ENCODE measurements at regions of chr3 and their contacts with region 1.

Region 1: GRCh38 chr3:156674046-156674910 is at the start of gene TIPARP:
- DNase-seq: peak; percentile 95 to 100 (median 99)
- ATAC-seq: peak; percentile 79
- H3K4me3 ChIP-seq: peak within 1 kb of the TSS; percentile 85
- H3K4me3 Mint-ChIP-seq: peak within 1 kb of the TSS; percentile 93
- H3K27ac ChIP-seq: peak within 1 kb of the TSS; percentile 68 to 93
- H3K27ac Mint-ChIP-seq: peak within 1 kb of the TSS; percentile 96
- H3K4me1 ChIP-seq: peaks cover 23% of the 10 kb centered on the region
- H3K4me1 Mint-ChIP-seq: peaks cover 44% of the 10 kb centered on the region
- H3K27me3 ChIP-seq: no peaks in the 10 kb centered on the region
- H3K27me3 Mint-ChIP-seq: no peaks in the 10 kb centered on the region
- CTCF ChIP-seq: peak; percentile 63
- total RNA-seq, gene TIPARP: 158 to 166 TPM

Region 2: DNA sequence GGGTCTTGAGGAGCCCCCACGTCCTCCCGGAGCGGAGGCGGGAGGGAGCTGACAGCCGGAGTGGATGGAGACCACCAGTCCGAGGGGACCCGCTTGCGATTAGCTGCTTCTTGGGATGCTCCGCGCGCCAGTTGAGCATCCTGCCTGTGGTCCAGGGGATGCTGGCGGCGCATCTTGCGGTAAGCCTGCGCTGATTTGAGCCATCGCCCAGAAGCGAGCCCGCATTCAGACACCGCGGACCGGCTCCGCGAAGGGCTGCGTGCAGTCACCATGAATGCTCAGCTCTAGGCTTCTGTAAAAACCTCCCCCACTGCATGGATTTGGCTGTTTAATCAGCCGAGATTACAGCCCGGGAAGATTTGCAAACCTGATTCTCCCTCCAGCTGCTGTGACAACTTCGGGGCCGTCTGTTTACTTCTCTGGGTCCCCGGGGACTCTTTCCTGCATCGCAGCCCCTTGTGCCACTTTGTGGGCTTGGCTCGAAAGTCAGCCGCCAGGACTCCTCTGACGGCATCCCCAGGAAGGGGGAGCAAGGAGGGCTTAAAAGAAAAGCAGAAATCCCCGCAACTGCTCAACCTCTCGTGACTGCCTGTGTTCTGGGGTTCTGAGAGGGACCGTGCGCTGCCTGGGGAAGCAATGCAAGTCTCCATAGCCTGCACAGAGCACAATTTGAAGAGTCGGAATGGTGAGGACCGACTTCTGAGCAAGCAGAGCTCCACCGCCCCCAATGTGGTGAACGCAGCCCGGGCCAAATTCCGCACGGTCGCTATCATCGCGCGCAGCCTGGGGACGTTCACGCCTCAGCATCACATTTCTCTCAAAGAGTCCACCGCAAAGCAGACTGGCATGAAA is 382.8 kb before region 1 on chr3:
- CTCF ChIA-PET with region 1: no interaction called
- POLR2A ChIA-PET with region 1: no interaction called
- intact Hi-C with region 1: no loop called
- DNase-seq: peak in 5 of 14 experiments; percentile 3 to 65 (median 9)
- ATAC-seq: peak; percentile 58
- H3K4me3 ChIP-seq: no peak overlapping the region
- H3K4me3 Mint-ChIP-seq: no peak overlapping the region
- H3K27ac ChIP-seq: no peak overlapping the region
- H3K27ac Mint-ChIP-seq: no peak overlapping the region
- H3K4me1 ChIP-seq: peaks cover 14% of the 10 kb centered on the region
- H3K4me1 Mint-ChIP-seq: no peaks in the 10 kb centered on the region
- H3K27me3 ChIP-seq: peaks cover 36 to 54% of the 10 kb centered on the region in 2 experiments
- H3K27me3 Mint-ChIP-seq: peaks cover 92% of the 10 kb centered on the region
- CTCF ChIP-seq: no peak

Region 3: GRCh38 chr3:156554842-156555687 is 119.2 kb before region 1 on chr3 and contains the start of gene SSR3:
- CTCF ChIA-PET with region 1: interaction called, 6 read pairs
- POLR2A ChIA-PET with region 1: interaction called, 91 read pairs
- intact Hi-C with region 1: loop called (anchors 1 kb)
- DNase-seq: peak; percentile 95 to 100 (median 98)
- ATAC-seq: peak; percentile 98
- H3K4me3 ChIP-seq: peak within 1 kb of the TSS; percentile 65
- H3K4me3 Mint-ChIP-seq: peak within 1 kb of the TSS; percentile 97
- H3K27ac ChIP-seq: peak within 1 kb of the TSS; percentile 48 to 76
- H3K27ac Mint-ChIP-seq: peak within 1 kb of the TSS; percentile 90
- H3K4me1 ChIP-seq: peaks cover 19% of the 10 kb centered on the region
- H3K4me1 Mint-ChIP-seq: peaks cover 52% of the 10 kb centered on the region
- H3K27me3 ChIP-seq: no peaks in the 10 kb centered on the region
- H3K27me3 Mint-ChIP-seq: peaks cover 5% of the 10 kb centered on the region
- CTCF ChIP-seq: no peak
- total RNA-seq, gene SSR3: 78.8 to 79.5 TPM

Region 4: DNA sequence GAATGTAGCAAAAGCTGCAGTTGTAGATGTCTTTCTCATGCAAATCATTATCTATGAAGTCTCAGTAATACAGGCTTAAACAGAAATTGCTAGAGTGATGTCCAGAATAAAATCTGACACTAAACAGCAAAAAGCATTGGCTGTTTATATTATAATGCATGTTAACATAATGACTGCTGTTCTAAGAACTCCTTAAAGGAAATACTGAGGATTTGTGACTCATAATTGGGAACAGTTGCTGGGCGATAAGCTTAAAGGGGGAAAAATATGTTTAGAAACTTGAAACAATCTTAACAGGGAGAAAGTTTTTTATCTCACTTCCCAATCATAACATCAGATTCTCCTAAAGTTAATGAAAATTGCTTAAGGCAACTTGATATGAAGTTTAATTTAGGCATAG is 17.6 kb after region 1 on chr3:
- CTCF ChIA-PET with region 1: no interaction called
- POLR2A ChIA-PET with region 1: interaction called, 29 read pairs
- intact Hi-C with region 1: loop called in 1 of 2 experiments (anchors 2 kb)
- DNase-seq: no peak
- ATAC-seq: no peak
- H3K4me3 ChIP-seq: no peak overlapping the region
- H3K4me3 Mint-ChIP-seq: no peak overlapping the region
- H3K27ac ChIP-seq: no peak overlapping the region
- H3K27ac Mint-ChIP-seq: no peak overlapping the region
- H3K4me1 ChIP-seq: peaks cover 14% of the 10 kb centered on the region
- H3K4me1 Mint-ChIP-seq: peaks cover 46% of the 10 kb centered on the region
- H3K27me3 ChIP-seq: no peaks in the 10 kb centered on the region
- H3K27me3 Mint-ChIP-seq: no peaks in the 10 kb centered on the region
- CTCF ChIP-seq: no peak

Region 5: DNA sequence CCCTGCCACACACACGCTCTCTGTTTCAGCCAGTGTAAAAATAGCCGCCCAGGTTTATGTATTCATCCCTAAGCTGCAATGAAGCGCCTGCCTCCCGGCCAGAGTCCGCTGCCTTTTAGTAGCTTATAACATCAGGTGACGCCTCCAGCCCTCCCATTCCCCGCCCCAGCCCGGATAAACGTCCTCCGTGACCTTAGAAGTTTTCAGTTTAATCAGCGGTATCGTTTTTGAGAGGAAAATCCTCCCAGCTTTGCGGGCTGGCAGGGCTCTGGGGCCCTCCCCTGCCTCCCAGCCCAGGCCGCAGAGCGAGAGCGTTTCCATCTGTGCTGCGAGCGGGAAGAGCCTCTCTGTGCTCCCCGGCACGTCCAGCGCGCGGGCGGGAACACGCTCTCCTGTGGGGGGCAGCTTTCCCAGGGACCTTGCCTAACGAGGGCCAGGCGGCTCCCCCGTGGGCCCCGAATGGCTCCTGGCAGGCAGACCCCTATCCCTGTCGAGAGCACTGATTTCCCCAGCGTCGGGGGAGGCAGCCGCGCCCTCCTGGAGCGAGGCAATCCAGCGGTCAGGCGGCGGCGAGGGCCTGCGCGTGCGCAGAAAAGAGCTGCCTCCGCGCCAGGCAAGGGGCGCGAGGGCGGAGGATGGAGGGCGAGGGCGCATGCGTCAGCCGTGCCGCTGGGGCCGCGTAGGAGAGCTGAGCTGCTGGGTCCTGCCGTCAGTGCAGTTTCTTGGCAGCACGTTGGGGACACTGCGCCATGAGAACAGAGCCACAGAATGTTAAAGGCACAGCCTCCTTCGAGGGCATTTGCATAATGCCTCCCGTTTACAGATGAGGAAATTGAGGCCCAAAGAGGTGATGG is 414.6 kb after region 1 on chr3:
- CTCF ChIA-PET with region 1: interaction called, 4 read pairs
- POLR2A ChIA-PET with region 1: interaction called, 71 read pairs
- intact Hi-C with region 1: loop called (anchors 2 kb)
- DNase-seq: peak; percentile 88 to 97 (median 92)
- ATAC-seq: peak; percentile 83
- H3K4me3 ChIP-seq: peak overlapping the region; percentile 71
- H3K4me3 Mint-ChIP-seq: peak overlapping the region; percentile 90
- H3K27ac ChIP-seq: peak overlapping the region; percentile 92 to 93
- H3K27ac Mint-ChIP-seq: peak overlapping the region; percentile 99
- H3K4me1 ChIP-seq: peaks cover 31% of the 10 kb centered on the region
- H3K4me1 Mint-ChIP-seq: peaks cover 20% of the 10 kb centered on the region
- H3K27me3 ChIP-seq: no peaks in the 10 kb centered on the region
- H3K27me3 Mint-ChIP-seq: no peaks in the 10 kb centered on the region
- CTCF ChIP-seq: peak; percentile 14

Region 6: DNA sequence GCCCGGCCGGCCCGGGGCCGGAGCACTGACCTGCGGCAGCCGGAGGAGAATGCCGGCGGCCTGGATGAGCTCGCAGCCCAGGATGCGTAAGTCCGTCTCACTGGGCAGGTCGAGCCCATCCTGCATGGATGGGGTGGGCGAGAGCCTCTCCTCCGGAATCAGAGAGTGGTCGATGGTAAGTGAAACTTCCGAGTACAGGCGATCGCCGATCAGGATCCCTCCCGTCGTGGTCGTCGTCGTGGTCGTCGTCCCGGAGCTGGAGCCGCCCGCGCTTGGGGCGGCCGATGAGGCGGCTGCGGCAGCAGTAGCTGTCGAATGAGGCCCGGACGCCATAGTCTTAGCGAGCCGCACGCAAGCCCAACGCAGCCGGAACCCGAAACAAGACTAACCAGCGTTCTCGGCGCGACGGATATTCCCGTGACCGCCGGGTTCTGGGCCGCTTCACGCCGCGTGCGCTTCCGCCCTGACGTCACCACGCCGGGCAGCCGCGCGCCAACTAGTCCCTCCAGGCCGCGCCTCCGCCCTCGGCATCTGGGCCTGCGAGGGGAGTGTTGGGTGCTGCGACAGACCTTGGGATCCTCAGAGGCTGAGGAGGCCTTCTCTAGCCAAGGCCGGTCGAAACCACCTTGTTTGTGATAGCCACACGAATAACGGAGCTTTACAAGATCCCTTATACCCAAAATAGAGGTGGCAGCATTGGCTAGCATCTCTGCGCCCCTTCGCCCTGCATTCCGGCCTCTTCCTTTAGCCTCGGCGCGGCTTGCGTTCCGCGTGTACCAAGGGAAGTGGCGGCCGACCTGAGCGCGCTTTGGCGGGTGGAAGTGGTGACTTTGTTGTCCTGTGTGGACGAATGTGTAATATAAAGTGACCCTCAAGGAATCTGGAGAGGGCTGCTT is 485.7 kb after region 1 on chr3 and contains the start of gene CCNL1:
- CTCF ChIA-PET with region 1: interaction called, 3 read pairs
- POLR2A ChIA-PET with region 1: interaction called, 60 read pairs
- intact Hi-C with region 1: loop called in 1 of 2 experiments (anchors 5 kb)
- DNase-seq: peak; percentile 93 to 100 (median 96)
- ATAC-seq: peak; percentile 67
- H3K4me3 ChIP-seq: peak within 1 kb of the TSS; percentile 95
- H3K4me3 Mint-ChIP-seq: peak within 1 kb of the TSS; percentile 95
- H3K27ac ChIP-seq: peak within 1 kb of the TSS; percentile 99 to 100
- H3K27ac Mint-ChIP-seq: peak within 1 kb of the TSS; percentile 100
- H3K4me1 ChIP-seq: peaks cover 22% of the 10 kb centered on the region
- H3K4me1 Mint-ChIP-seq: peaks cover 67% of the 10 kb centered on the region
- H3K27me3 ChIP-seq: no peaks in the 10 kb centered on the region
- H3K27me3 Mint-ChIP-seq: no peaks in the 10 kb centered on the region
- CTCF ChIP-seq: no peak
- total RNA-seq, gene CCNL1: 1,350 to 1,388 TPM

Measured in CD4-positive, alpha-beta T cell (primary cell).